ENCODE measurements at regions of chr22 and their contacts with region 1.

Region 1: GRCh38 chr22:24175160-24175808 is 6.0 kb upstream of the SUSD2 start:
- DNase-seq: peak; percentile 90
- ATAC-seq: peak; percentile 84
- H3K4me3 ChIP-seq: no peak overlapping the region
- H3K27ac ChIP-seq: no peak overlapping the region
- H3K4me1 ChIP-seq: no peaks in the 10 kb centered on the region
- H3K27me3 ChIP-seq: no peaks in the 10 kb centered on the region
- CTCF ChIP-seq: peak; percentile 86

Region 2: GRCh38 chr22:24005201-24005600 is 170.1 kb before region 1 on chr22 and contains the start of gene GSTT4:
- intact Hi-C with region 1: no loop called
- DNase-seq: no peak
- ATAC-seq: no peak
- H3K4me3 ChIP-seq: no peak within 1 kb of the TSS
- H3K27ac ChIP-seq: no peak within 1 kb of the TSS
- H3K4me1 ChIP-seq: no peaks in the 10 kb centered on the region
- H3K27me3 ChIP-seq: no peaks in the 10 kb centered on the region
- CTCF ChIP-seq: no peak
- total RNA-seq, gene GSTT4: not detected

Region 3: GRCh38 chr22:24037851-24038765 is 137.2 kb before region 1 on chr22:
- intact Hi-C with region 1: no loop called
- DNase-seq: no peak
- ATAC-seq: no peak
- H3K4me3 ChIP-seq: no peak overlapping the region
- H3K27ac ChIP-seq: no peak overlapping the region
- H3K4me1 ChIP-seq: no peaks in the 10 kb centered on the region
- H3K27me3 ChIP-seq: no peaks in the 10 kb centered on the region
- CTCF ChIP-seq: no peak

Region 4: DNA sequence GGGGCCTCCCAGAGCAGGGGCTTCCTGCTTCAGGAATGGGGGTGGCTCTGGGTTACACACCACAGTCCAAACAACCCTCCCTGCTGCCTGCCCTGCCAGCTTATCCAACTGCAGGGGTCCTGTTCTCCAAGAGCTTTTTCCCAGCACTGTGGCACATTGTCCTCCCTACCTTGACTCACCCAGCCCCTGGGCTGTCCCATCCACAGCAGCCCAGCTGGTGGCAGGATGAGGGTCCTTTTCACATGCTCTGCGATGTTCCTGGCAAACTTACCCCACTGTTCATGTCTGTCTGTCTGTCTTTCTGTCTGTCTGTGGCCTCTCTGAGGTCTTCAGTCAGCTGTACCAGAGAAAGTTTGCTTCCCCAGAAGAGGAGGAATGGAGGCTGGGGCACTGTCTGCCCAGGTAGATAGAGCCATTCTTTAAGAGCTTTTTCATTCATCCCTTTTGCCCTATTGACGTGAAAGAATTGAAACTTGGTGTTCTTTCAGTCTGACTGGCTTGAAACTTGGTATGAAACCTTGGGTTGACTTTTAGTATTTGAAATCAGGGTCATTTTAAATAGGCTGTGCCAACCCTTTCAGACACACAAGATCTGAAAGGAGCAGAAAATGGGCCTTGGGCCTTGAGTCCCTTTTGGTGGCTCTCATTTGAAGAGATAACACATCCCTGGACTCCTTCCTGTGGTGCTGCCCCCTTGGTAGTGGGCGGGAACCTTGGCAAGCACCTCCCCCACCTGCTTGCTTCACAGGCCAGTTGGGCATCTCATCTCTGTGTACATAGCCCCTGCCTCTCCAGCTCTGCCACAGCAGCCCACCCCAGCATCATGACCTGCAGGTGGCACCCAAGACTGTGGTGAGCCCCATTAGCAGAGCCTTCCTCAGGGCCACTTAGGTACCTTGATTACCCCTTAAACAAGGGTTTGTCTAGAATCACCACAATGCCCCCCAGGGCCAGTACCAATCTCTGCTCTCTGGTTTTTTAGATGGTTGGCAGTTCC is 68.6 kb before region 1 on chr22:
- intact Hi-C with region 1: loop called (anchors 10 kb)
- DNase-seq: no peak
- ATAC-seq: peak; percentile 52
- H3K4me3 ChIP-seq: no peak overlapping the region
- H3K27ac ChIP-seq: peak overlapping the region; percentile 3
- H3K4me1 ChIP-seq: peaks cover 5% of the 10 kb centered on the region
- H3K27me3 ChIP-seq: no peaks in the 10 kb centered on the region
- CTCF ChIP-seq: peak; percentile 34

Region 5: GRCh38 chr22:24270638-24271408 is 95.5 kb after region 1 on chr22 and contains the start of gene SPECC1L:
- intact Hi-C with region 1: no loop called
- DNase-seq: peak; percentile 96
- ATAC-seq: peak; percentile 98
- H3K4me3 ChIP-seq: peak within 1 kb of the TSS; percentile 89
- H3K27ac ChIP-seq: peak within 1 kb of the TSS; percentile 90
- H3K4me1 ChIP-seq: peaks cover 31% of the 10 kb centered on the region
- H3K27me3 ChIP-seq: no peaks in the 10 kb centered on the region
- CTCF ChIP-seq: no peak
- total RNA-seq, gene SPECC1L: 87.1 TPM